Activated CD4-positive, alpha-beta T cell treated with anti-CD3 and anti-CD28 coated beads for 36 hours (primary cell): ENCODE measurements at regions of chr6 and their contacts with region 1.

Region 1: DNA sequence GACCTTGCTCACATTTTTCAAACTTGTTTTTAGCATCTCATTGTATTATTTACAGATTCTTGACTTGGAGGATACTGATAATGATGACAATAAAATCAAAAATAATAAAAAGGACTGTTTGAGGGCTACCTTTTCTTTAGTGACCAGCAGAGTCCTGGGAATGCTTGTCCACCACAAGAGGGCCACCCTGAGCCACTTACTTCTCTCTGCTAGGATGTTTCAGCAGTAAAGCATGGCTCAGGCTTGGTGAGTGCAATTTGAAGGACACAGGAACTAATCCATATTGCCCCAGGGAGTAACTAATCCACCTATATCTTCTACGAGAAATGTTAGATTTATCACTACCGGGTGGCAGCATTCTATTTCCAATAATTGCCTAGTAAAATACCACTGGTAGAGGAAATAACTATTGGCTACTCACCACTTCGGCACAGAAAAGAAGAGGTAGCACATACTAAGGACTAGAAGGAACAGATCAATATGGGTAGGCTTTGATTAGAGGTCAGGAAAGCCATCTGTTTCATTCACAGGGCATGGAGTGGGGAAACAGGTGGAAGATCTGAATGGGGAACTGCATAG is 5.8 kb upstream of the KIAA0408 start:
- DNase-seq: peak; percentile 84
- ATAC-seq: peak; percentile 82
- H3K4me3 Mint-ChIP-seq: no peak overlapping the region
- H3K27ac Mint-ChIP-seq: no peak overlapping the region
- H3K4me1 Mint-ChIP-seq: no peaks in the 10 kb centered on the region
- H3K27me3 Mint-ChIP-seq: peaks cover 2% of the 10 kb centered on the region

Region 2: GRCh38 chr6:127288705-127289104 is 176.3 kb before region 1 on chr6:
- CTCF ChIA-PET with region 1: no interaction called
- POLR2A ChIA-PET with region 1: no interaction called
- intact Hi-C with region 1: no loop called
- DNase-seq: no peak
- ATAC-seq: peak; percentile 21
- H3K4me3 Mint-ChIP-seq: no peak overlapping the region
- H3K27ac Mint-ChIP-seq: no peak overlapping the region
- H3K4me1 Mint-ChIP-seq: peaks cover 50% of the 10 kb centered on the region
- H3K27me3 Mint-ChIP-seq: no peaks in the 10 kb centered on the region

Region 3: DNA sequence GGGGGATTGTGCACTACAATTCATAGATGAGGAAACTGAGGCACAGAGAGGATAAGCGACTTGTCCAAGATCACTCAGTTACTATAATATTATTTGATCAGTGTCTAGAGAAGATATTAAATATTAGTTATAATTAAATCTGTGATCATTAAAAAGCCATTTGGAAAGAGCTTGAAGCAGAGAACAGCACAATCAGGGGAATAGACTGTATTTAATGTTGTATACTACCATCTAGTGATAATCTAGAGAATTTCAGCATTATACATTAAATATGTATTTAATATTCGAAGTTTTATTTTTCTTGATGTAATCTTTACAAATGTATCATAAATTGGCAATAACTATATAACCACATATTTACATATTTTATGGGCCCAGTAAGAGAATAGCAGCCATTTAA is 74.3 kb after region 1 on chr6:
- CTCF ChIA-PET with region 1: interaction called, 40 read pairs
- POLR2A ChIA-PET with region 1: no interaction called
- intact Hi-C with region 1: loop called (anchors 1 kb)
- DNase-seq: no peak
- ATAC-seq: peak; percentile 57
- H3K4me3 Mint-ChIP-seq: no peak overlapping the region
- H3K27ac Mint-ChIP-seq: no peak overlapping the region
- H3K4me1 Mint-ChIP-seq: peaks cover 2% of the 10 kb centered on the region
- H3K27me3 Mint-ChIP-seq: peaks cover 15% of the 10 kb centered on the region

Region 4: GRCh38 chr6:127641905-127642304 is 176.9 kb after region 1 on chr6:
- CTCF ChIA-PET with region 1: no interaction called
- POLR2A ChIA-PET with region 1: no interaction called
- intact Hi-C with region 1: loop called in 1 of 2 experiments (anchors 2 kb)
- DNase-seq: peak; percentile 14
- ATAC-seq: no peak
- H3K4me3 Mint-ChIP-seq: no peak overlapping the region
- H3K27ac Mint-ChIP-seq: no peak overlapping the region
- H3K4me1 Mint-ChIP-seq: no peaks in the 10 kb centered on the region
- H3K27me3 Mint-ChIP-seq: peaks cover 4% of the 10 kb centered on the region